ENCODE measurements at regions of chr6 and their contacts with region 1.

Region 1: GRCh38 chr6:129251669-129252376 is 368.9 kb downstream of the LAMA2 start:
- DNase-seq: peak; percentile 75
- ATAC-seq: peak; percentile 96
- H3K4me3 Mint-ChIP-seq: no peak overlapping the region
- H3K27ac Mint-ChIP-seq: no peak overlapping the region
- H3K4me1 Mint-ChIP-seq: peaks cover 11% of the 10 kb centered on the region
- H3K27me3 Mint-ChIP-seq: peaks cover 8% of the 10 kb centered on the region
- CTCF ChIP-seq: peak; percentile 89

Region 2: GRCh38 chr6:129186988-129187387 is 64.8 kb before region 1 on chr6:
- CTCF ChIA-PET with region 1: no interaction called
- POLR2A ChIA-PET with region 1: no interaction called
- intact Hi-C with region 1: no loop called
- DNase-seq: no peak
- ATAC-seq: no peak
- H3K4me3 Mint-ChIP-seq: no peak overlapping the region
- H3K27ac Mint-ChIP-seq: no peak overlapping the region
- H3K4me1 Mint-ChIP-seq: no peaks in the 10 kb centered on the region
- H3K27me3 Mint-ChIP-seq: no peaks in the 10 kb centered on the region
- CTCF ChIP-seq: no peak

Region 3: GRCh38 chr6:129239825-129240491 is 11.9 kb before region 1 on chr6:
- CTCF ChIA-PET with region 1: interaction called, 11 read pairs
- POLR2A ChIA-PET with region 1: interaction called, 3 read pairs
- intact Hi-C with region 1: no loop called
- DNase-seq: no peak
- ATAC-seq: no peak
- H3K4me3 Mint-ChIP-seq: no peak overlapping the region
- H3K27ac Mint-ChIP-seq: no peak overlapping the region
- H3K4me1 Mint-ChIP-seq: no peaks in the 10 kb centered on the region
- H3K27me3 Mint-ChIP-seq: peaks cover 14% of the 10 kb centered on the region
- CTCF ChIP-seq: no peak

Region 4: DNA sequence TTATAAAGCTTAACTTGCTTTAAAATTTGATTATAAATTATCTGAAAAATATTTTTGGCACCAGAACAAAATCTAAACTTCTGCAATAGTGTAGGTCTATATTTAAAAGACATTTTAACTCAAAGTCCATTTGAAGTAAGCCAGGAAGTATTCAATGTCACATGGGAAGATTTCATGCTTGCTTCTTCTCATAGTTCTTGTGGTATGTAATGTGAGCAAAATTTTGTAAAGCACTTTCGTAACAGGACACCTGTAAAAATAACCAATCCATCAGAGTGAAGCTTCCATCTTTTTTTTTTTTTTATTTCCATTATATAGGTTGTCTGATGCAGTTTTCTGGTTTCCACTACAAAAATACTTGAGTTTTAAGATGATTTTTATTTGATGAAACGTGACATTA is 17.3 kb after region 1 on chr6:
- CTCF ChIA-PET with region 1: interaction called, 10 read pairs
- POLR2A ChIA-PET with region 1: no interaction called
- intact Hi-C with region 1: no loop called
- DNase-seq: no peak
- ATAC-seq: no peak
- H3K4me3 Mint-ChIP-seq: no peak overlapping the region
- H3K27ac Mint-ChIP-seq: no peak overlapping the region
- H3K4me1 Mint-ChIP-seq: no peaks in the 10 kb centered on the region
- H3K27me3 Mint-ChIP-seq: peaks cover 8% of the 10 kb centered on the region
- CTCF ChIP-seq: no peak

Measured in activated CD8-positive, alpha-beta T cell treated with anti-CD3 and anti-CD28 coated beads for 36 hours (primary cell).